ENCODE measurements at regions of chr9 and their contacts with region 1.

Region 1: GRCh38 chr9:122350638-122351355 is 20.0 kb upstream of the PTGS1 start:
- DNase-seq: peak in 1 of 2 experiments; percentile 94
- H3K4me3 ChIP-seq: no peak overlapping the region
- H3K27ac ChIP-seq: no peak overlapping the region
- H3K4me1 ChIP-seq: peaks cover 0 to 9% (median 5%) of the 10 kb centered on the region in 4 experiments; a peak in 5 of 7 replicates
- H3K27me3 ChIP-seq: peaks cover 0 to 17% (median 9%) of the 10 kb centered on the region in 4 experiments; a peak in 6 of 7 replicates
- CTCF ChIP-seq: peak; percentile 98
- EP300 ChIP-seq: no peak
- POLR2A ChIP-seq: no peak
- RAD21 ChIP-seq: peak; percentile 100

Region 2: GRCh38 chr9:122092611-122093506 is 257.9 kb before region 1 on chr9 and contains the start of gene TTLL11:
- CTCF ChIA-PET with region 1: interaction called, 124 read pairs
- POLR2A ChIA-PET with region 1: interaction called, 5 read pairs
- DNase-seq: peak; percentile 49 to 95
- H3K4me3 ChIP-seq: peak within 1 kb of the TSS; percentile 49 to 77 (median 66)
- H3K27ac ChIP-seq: no peak within 1 kb of the TSS
- H3K4me1 ChIP-seq: peaks cover 0 to 6% (median 0%) of the 10 kb centered on the region in 4 experiments; a peak in 4 of 7 replicates
- H3K27me3 ChIP-seq: peaks cover 0 to 19% (median 13%) of the 10 kb centered on the region in 4 experiments; a peak in 5 of 7 replicates
- CTCF ChIP-seq: no peak
- EP300 ChIP-seq: no peak
- POLR2A ChIP-seq: no peak
- RAD21 ChIP-seq: no peak
- total RNA-seq, gene TTLL11: 0.80 and 0.86 TPM in 2 replicates

Region 3: GRCh38 chr9:122144836-122145591 is 205.8 kb before region 1 on chr9:
- CTCF ChIA-PET with region 1: interaction called, 10 read pairs
- POLR2A ChIA-PET with region 1: no interaction called
- DNase-seq: no peak
- H3K4me3 ChIP-seq: no peak overlapping the region
- H3K27ac ChIP-seq: no peak overlapping the region
- H3K4me1 ChIP-seq: no peaks in the 10 kb centered on the region
- H3K27me3 ChIP-seq: no peaks in the 10 kb centered on the region
- CTCF ChIP-seq: peak in 2 of 3 experiments; percentile 16 to 52; a peak in 2 of 4 replicates
- EP300 ChIP-seq: no peak
- POLR2A ChIP-seq: no peak
- RAD21 ChIP-seq: peak; percentile 9 to 31; a peak in 2 of 4 replicates

Region 4: DNA sequence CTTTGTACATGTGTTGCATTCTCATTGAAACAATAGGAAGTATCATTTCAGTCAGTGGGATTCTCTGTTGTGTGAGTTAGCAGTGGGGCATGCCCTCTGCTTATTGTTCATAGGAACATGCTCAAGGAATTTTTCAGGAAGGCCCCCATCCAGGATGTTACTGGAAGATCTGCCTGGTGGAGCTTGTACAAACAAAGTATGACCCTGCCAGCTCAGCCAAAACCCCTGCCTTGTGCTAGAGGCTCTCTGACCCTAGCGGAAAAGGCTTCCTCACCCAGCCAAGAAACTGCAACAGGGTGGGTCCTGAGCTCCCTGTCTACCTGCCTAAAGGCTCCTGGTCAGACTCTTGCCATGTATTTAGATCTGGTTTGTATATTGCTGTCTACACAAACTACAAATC is 42.9 kb before region 1 on chr9:
- CTCF ChIA-PET with region 1: interaction called, 12 read pairs
- POLR2A ChIA-PET with region 1: no interaction called
- DNase-seq: no peak
- H3K4me3 ChIP-seq: no peak overlapping the region
- H3K27ac ChIP-seq: no peak overlapping the region
- H3K4me1 ChIP-seq: no peaks in the 10 kb centered on the region
- H3K27me3 ChIP-seq: no peaks in the 10 kb centered on the region
- CTCF ChIP-seq: no peak
- EP300 ChIP-seq: no peak
- POLR2A ChIP-seq: no peak
- RAD21 ChIP-seq: no peak

Region 5: DNA sequence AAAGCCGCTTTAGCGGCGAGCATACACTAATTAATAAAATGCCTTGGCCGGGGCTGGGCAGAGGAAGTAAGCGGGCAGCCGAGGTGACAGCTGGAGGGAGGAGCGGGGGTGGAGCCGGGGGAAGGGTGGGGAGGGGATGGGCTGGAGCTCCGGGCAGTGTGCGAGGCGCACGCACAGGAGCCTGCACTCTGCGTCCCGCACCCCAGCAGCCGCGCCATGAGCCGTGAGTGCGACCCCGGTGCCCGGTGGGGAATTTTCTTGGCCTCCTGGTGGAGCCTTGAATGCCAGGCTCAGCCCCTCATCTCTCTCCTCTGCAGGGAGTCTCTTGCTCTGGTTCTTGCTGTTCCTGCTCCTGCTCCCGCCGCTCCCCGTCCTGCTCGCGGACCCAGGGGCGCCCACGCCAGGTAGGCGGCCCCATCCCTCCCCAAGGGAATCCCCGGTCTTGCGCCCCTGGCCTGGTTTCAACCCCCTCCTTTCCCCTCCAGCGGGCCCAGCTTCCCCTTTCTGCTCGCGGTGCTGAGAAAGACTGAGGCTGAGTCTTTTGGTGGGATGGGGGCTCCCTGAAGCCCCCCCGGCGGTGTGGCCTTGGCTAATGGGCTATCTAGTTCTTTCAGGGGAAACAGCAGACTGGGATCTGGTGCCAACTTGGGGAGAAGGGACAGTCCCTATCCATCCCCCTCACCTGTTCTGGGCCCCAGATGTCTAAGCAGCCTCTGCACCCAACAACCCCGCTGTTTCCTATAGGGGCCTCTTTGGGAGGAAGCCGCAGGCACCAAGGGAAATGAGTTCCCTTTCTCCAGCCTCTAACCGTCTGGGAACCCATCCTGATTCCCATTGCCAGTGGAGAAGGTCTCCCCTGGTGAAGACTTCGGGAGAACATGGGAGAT is 20.3 kb after region 1 on chr9 and contains the start of gene PTGS1:
- CTCF ChIA-PET with region 1: interaction called, 42 read pairs
- POLR2A ChIA-PET with region 1: interaction called, 3 read pairs
- DNase-seq: peak in 1 of 2 experiments; percentile 65
- H3K4me3 ChIP-seq: peak within 1 kb of the TSS; percentile 55 to 71 (median 59)
- H3K27ac ChIP-seq: no peak within 1 kb of the TSS
- H3K4me1 ChIP-seq: peaks cover 13 to 20% (median 16%) of the 10 kb centered on the region in 4 experiments
- H3K27me3 ChIP-seq: peaks cover 5 to 45% (median 36%) of the 10 kb centered on the region in 4 experiments
- CTCF ChIP-seq: no peak
- EP300 ChIP-seq: no peak
- POLR2A ChIP-seq: no peak
- RAD21 ChIP-seq: no peak
- total RNA-seq, gene PTGS1: 1.1 and 1.3 TPM in 2 replicates

Region 6: DNA sequence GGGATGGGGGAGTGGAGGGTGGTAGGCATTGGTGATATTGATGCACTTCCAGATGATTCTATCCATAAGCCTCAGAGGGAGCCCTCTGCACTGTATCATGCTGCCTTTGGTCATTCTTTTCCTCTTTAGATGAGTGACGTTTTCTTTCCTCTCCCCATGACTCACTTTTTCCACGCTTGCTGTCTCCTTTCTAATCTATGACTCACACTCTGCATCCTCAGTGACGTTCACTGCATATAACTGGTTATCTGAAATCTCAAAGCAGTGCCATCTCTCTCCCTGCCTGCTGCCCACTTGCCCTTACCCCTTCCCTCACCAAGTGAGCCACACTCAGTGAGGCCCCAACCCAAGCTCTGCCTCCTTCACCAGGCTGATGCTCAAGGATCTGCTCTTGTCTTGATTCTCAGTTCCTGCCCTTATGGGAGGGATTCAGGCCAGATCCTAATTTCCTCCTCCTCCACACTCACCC is 51.6 kb after region 1 on chr9:
- CTCF ChIA-PET with region 1: no interaction called
- POLR2A ChIA-PET with region 1: no interaction called
- DNase-seq: no peak
- H3K4me3 ChIP-seq: no peak overlapping the region
- H3K27ac ChIP-seq: no peak overlapping the region
- H3K4me1 ChIP-seq: no peaks in the 10 kb centered on the region
- H3K27me3 ChIP-seq: no peaks in the 10 kb centered on the region
- CTCF ChIP-seq: no peak
- EP300 ChIP-seq: no peak
- POLR2A ChIP-seq: no peak
- RAD21 ChIP-seq: no peak

Region 7: GRCh38 chr9:122445155-122445749 is 94.5 kb after region 1 on chr9:
- CTCF ChIA-PET with region 1: no interaction called
- POLR2A ChIA-PET with region 1: no interaction called
- DNase-seq: no peak
- H3K4me3 ChIP-seq: no peak overlapping the region
- H3K27ac ChIP-seq: no peak overlapping the region
- H3K4me1 ChIP-seq: no peaks in the 10 kb centered on the region
- H3K27me3 ChIP-seq: no peaks in the 10 kb centered on the region
- CTCF ChIP-seq: no peak
- EP300 ChIP-seq: no peak
- POLR2A ChIP-seq: no peak
- RAD21 ChIP-seq: no peak